ENCODE measurements at regions of chr5 and their contacts with region 1.

Region 1: DNA sequence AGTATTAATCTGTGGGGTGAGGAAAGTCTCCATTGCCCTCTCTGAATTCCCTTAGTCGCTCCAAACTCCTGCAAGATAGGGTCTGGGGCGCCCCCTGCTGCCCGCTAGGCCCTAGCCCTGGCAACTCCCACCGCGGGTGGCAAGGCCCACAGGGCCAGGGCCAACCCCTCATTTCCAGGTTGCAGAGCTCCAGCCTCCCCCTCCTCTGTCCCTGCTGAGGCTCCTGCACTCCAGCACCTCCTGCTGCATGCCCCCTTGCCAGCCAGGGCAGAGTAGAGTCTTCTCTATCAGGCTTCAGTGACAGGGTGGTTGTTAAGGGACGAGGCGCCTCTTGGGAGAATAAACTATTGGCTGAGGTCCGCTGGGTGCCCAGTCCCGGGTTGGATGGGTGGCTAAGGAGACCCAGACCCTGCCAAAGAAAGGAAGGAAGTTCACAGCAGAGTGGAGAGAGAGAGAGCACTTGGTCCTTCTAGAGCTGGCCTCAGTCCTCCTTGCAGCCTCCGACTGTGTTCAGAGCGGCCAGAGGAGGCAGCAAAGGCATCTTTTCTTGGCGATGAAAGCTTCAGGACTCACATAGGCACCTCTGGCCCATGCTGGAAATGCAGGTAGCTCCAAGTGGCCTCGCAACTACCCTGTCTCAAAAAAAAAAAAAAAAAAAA is 45.6 kb downstream of the SAR1B start:
- DNase-seq: peak; percentile 93
- ATAC-seq: peak; percentile 92
- H3K4me3 Mint-ChIP-seq: no peak overlapping the region
- H3K27ac Mint-ChIP-seq: peak overlapping the region; percentile 43
- H3K4me1 Mint-ChIP-seq: peaks cover 9% of the 10 kb centered on the region
- H3K27me3 Mint-ChIP-seq: no peaks in the 10 kb centered on the region
- CTCF ChIP-seq: peak; percentile 97

Region 2: DNA sequence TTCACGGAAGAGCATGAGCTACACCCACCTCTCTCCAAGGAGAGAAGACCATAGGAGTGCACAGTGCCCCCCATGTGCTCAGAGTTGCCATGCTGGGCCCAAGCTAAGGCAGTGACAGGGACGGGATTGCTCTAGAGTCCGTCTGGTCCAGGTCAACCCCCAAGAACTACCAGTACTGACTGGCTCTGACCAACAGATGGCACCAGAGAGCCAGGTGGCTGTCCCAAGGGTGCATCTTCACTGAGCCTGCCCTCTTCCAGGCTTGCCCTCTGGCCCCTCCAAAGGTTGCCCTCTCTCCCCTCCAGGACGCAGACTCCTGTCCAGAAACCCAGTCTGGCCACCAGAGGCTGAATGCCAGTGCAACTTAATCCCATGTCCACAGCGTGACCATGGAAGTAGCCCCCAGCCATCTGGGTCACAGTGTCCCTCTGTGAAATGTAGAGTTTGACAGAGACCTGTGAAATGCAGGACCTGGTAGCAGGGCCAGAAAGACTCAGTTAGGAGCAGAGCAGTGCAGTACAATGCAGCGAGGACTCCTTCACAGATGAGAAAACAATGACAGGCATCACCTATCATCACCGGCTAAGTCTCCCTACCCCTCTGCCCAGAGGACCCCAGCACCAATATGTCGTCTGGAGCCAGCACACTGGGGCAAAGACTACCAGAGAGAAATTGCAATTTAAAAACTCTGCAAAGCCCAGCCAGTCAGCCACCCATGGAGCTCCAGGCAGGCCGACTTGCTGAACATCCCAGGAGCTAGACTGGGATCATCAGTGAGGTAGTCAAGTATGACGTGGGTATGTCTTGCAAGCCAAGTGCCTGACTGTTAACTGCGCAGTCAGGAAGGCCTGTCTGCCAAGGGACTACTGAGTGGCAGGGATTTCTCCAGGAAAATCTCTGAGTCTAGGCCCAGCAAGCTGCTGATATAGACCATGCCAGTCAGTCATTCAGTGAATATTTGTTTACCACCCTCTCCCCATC is 402.6 kb before region 1 on chr5:
- CTCF ChIA-PET with region 1: interaction called, 6 read pairs
- POLR2A ChIA-PET with region 1: no interaction called
- intact Hi-C with region 1: loop called (anchors 10 kb)
- DNase-seq: peak; percentile 81
- ATAC-seq: peak; percentile 99
- H3K4me3 Mint-ChIP-seq: no peak overlapping the region
- H3K27ac Mint-ChIP-seq: no peak overlapping the region
- H3K4me1 Mint-ChIP-seq: no peaks in the 10 kb centered on the region
- H3K27me3 Mint-ChIP-seq: no peaks in the 10 kb centered on the region
- CTCF ChIP-seq: peak; percentile 87

Region 3: DNA sequence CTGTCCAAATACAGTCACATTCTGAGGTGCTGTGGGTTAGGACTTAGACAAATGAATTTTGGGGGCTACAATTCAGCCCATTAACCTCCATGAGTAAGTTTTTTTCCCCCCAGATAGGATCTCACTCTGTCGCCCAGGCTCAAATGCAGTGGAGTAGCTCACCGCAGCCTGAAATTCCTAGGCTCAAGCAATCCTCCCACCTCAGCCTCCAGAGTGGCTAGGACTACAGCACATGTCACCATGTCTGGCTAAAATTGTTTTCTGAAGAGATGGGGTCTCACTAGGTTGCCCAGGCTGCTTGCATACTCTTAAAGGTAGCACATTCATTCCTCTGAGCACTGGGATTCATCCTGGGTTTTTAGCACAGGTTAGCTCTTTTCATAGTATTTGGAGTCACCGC is 383.4 kb before region 1 on chr5:
- CTCF ChIA-PET with region 1: no interaction called
- POLR2A ChIA-PET with region 1: no interaction called
- intact Hi-C with region 1: no loop called
- DNase-seq: no peak
- ATAC-seq: no peak
- H3K4me3 Mint-ChIP-seq: no peak overlapping the region
- H3K27ac Mint-ChIP-seq: no peak overlapping the region
- H3K4me1 Mint-ChIP-seq: peaks cover 10% of the 10 kb centered on the region
- H3K27me3 Mint-ChIP-seq: no peaks in the 10 kb centered on the region
- CTCF ChIP-seq: no peak

Region 4: DNA sequence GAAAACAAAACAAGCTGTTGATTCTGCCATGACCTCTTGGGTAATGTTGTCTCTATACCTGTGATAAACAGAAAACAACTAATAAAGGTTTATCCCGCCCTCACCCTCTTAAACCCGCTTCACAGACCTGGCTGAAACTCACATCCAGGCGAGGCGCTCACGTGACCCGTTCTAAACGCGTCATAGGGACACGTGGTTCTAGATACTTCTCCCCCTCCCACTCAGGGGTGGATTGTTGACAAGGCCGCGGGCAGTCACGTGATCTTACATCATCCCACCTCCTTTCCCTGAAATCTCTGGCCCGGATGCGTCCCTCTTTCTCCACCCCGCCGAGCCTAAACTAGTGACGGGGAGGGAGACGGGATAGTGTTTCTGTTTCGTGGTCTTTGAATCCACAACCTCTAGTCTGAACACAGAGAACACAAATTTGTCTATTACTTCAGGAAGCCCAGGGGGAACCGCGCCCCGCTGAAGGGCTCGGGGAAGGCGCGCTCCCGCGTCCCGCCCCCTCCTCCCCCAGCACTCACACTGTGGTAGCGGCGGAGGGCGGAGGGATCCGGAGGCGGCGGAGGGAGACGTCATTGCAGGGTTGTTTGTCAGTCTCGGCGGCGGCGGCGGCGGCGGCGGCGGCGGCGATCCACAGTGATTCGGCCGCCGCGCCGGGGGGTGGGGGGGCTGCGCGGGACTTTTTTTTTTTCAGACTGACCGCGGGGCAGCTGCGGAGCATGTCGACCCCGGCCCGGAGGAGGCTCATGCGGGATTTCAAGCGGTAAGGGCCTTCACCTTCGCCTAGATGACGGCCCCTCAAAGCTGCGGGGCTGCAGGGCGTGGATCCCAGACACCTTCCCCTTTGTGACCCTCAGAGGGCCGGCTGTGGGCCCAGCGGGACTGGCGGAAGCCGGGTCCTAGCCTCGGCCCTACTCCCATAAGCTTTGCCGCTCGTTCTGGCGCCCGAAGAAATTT is 215.8 kb before region 1 on chr5 and contains the start of gene UBE2B:
- CTCF ChIA-PET with region 1: interaction called, 14 read pairs
- POLR2A ChIA-PET with region 1: no interaction called
- intact Hi-C with region 1: no loop called
- DNase-seq: peak; percentile 100
- ATAC-seq: peak; percentile 77
- H3K4me3 Mint-ChIP-seq: peak within 1 kb of the TSS; percentile 95
- H3K27ac Mint-ChIP-seq: peak within 1 kb of the TSS; percentile 99
- H3K4me1 Mint-ChIP-seq: peaks cover 41% of the 10 kb centered on the region
- H3K27me3 Mint-ChIP-seq: no peaks in the 10 kb centered on the region
- CTCF ChIP-seq: no peak
- total RNA-seq, gene UBE2B: 97.6 to 98.9 TPM

Region 5: DNA sequence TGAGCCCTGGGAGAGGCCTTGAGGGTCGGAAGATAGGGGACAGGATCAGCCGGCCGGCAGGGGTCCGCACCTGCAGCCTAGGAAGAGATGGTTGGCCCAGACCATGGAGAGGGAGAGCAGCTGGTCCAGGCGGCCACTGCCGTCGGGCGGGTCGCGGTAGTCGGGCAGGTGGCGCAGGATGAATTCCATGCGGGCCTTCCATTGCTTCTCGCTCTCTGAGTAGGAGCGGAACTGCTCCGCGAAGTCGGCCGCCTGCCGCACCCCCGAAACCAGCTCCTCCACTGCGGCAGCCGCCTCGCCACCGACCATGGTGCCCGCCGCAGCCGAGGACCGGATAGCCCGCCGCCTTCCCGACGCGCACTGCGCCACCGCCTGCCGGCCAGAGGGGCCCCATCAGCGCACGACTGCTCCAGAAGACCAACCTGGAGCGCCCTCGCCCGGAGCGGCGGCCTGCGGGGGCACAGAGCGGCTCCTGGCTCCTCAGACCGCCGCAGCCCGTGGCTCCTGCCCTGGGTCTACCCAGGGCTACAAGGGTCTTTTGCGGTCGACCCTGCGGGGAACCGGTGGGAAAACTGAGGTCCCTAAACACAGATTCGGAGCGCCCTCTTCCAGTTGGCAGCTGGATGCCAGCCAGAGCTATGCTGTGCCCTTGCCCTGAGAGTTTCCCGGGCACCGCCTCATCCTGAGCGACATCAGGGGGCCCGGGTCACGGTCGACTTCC is 175.3 kb before region 1 on chr5 and contains the start of gene CDKN2AIPNL:
- CTCF ChIA-PET with region 1: interaction called, 72 read pairs
- POLR2A ChIA-PET with region 1: interaction called, 4 read pairs
- intact Hi-C with region 1: no loop called
- DNase-seq: peak; percentile 94
- ATAC-seq: peak; percentile 99
- H3K4me3 Mint-ChIP-seq: peak within 1 kb of the TSS; percentile 97
- H3K27ac Mint-ChIP-seq: peak within 1 kb of the TSS; percentile 76
- H3K4me1 Mint-ChIP-seq: peaks cover 35% of the 10 kb centered on the region
- H3K27me3 Mint-ChIP-seq: no peaks in the 10 kb centered on the region
- CTCF ChIP-seq: peak; percentile 71
- total RNA-seq, gene CDKN2AIPNL: 38.2 to 41.1 TPM

Region 6: DNA sequence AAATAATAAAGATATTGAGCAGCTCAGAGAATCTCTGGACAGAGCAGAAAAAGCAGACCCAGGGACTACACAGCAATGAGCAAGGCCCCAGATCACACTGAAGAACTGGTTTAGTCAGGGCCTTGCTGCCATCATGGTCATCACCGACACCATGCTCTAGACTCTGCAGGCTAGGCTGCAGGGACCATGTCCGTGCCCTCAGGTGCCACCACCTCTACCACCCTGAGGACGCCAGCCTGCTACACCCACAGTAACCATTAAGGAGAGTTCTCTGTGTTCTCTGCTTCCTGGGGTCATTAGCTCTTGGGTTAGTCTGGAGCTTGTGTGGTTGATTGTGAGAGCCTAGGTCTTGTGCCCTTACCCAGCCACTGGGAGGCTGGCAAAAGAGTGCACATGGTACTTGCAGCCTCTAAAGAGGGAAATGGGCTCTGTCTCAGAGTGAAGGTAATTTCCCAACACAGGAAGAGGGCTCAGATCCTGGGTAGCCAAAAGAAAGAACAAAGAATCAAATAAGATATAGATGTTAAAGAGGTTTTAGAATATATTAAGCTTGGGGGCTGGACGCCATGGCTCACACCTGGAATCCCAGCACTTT is 93.4 kb before region 1 on chr5:
- CTCF ChIA-PET with region 1: no interaction called
- POLR2A ChIA-PET with region 1: no interaction called
- intact Hi-C with region 1: no loop called
- DNase-seq: no peak
- ATAC-seq: peak; percentile 27
- H3K4me3 Mint-ChIP-seq: no peak overlapping the region
- H3K27ac Mint-ChIP-seq: no peak overlapping the region
- H3K4me1 Mint-ChIP-seq: no peaks in the 10 kb centered on the region
- H3K27me3 Mint-ChIP-seq: no peaks in the 10 kb centered on the region
- CTCF ChIP-seq: no peak

Region 7: DNA sequence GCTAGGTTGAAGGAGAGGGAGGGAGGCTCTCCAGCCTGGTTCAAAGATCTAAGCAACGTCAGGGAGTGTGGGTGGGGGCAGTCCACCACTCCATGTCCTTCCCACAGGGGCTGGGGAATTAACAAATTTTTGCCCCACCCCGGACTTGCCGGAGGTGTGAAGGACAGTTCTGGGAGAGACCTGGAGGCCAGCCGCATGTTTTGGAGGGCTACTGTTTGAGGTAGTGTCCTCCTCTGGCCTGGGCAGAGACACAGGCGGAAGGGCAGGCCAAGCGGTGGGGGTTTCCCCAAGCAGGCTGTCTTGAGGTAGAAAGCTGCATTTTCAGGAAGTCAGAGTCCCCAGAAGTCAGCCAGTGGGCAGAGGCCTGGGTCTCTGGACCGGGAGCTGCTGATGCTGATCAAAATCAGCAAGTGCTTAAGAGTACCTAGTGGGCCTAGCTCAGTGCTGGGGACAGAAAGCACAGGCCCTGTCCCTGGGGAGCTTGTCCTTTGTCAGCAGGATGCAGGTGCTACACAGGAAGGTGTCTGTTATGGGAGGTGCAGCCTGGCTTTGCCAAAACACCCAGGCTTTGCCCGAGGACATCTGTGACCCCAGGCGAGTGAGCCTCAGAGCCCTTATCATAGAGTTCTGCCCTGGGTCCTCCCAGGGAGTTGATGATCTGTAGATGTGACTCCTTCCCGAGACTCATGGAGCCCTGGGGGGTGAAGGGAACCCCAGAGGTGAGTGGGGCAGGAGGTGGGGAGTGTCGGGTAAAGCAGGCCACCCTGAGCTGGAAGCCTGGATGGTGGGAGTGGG is 43.0 kb before region 1 on chr5:
- CTCF ChIA-PET with region 1: interaction called, 10 read pairs
- POLR2A ChIA-PET with region 1: no interaction called
- intact Hi-C with region 1: no loop called
- DNase-seq: peak; percentile 76
- ATAC-seq: peak; percentile 84
- H3K4me3 Mint-ChIP-seq: peak overlapping the region; percentile 76
- H3K27ac Mint-ChIP-seq: peak overlapping the region; percentile 96
- H3K4me1 Mint-ChIP-seq: peaks cover 70% of the 10 kb centered on the region
- H3K27me3 Mint-ChIP-seq: no peaks in the 10 kb centered on the region
- CTCF ChIP-seq: no peak

Region 8: DNA sequence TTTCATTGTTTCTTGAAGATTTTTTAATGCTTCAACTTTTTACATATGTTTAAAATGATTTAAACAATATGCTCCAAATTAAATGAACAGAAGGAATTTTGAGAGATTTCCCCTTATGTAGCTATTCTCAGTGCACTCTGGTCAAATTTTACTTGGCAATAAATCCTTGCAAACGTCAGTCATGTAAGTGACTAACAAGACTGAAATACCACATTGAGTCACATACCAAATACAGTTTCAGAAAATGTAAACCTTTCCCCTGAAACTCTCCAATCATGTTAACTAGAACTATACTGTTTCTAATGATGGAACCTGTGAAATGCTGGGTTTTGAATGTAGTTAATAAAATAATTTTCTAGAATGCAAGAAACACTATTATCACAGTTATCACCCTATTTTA is 16.1 kb after region 1 on chr5:
- CTCF ChIA-PET with region 1: interaction called, 41 read pairs
- POLR2A ChIA-PET with region 1: interaction called, 4 read pairs
- intact Hi-C with region 1: no loop called
- DNase-seq: no peak
- ATAC-seq: peak; percentile 90
- H3K4me3 Mint-ChIP-seq: no peak overlapping the region
- H3K27ac Mint-ChIP-seq: no peak overlapping the region
- H3K4me1 Mint-ChIP-seq: peaks cover 36% of the 10 kb centered on the region
- H3K27me3 Mint-ChIP-seq: no peaks in the 10 kb centered on the region
- CTCF ChIP-seq: no peak

Region 9: DNA sequence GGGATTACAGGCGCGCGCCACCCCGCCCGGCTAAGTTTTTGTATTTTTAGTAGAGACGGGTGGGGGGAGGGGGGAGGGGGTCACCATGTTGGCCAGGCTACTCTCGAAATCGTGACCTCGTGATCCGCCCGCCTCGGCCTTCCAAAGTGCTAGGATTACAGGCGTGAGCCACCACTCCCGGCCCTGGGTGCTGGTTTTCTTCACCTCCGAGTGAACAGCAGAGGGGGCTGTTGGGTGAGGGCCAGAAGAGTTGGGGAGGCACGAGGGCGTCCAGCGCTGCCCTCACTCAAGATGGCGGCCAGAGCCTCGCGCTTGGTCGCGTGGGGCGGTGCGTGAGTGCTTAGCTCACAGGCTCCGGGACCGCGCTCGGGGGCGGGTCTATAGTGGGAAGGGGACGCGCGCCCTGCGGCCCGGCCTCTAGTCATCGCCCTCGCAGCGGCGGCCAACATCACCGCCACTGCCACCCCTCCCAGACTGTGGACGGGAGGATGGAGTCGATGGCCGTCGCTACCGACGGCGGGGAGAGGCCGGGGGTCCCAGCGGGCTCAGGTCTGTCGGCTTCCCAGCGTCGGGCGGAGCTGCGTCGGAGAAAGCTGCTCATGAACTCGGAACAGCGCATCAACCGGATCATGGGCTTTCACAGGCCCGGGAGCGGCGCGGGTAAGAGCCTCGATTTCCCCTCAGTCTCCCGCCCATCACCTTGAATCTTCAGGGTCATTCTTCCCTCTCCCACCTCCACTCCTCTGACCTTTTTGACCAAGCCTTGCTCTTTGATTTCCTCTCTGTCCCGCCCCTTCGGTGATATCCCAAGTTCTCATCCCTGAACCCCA is 151.4 kb after region 1 on chr5 and contains the start of gene CAMLG:
- CTCF ChIA-PET with region 1: interaction called, 17 read pairs
- POLR2A ChIA-PET with region 1: no interaction called
- intact Hi-C with region 1: no loop called
- DNase-seq: peak; percentile 98
- ATAC-seq: peak; percentile 97
- H3K4me3 Mint-ChIP-seq: peak within 1 kb of the TSS; percentile 91
- H3K27ac Mint-ChIP-seq: peak within 1 kb of the TSS; percentile 86
- H3K4me1 Mint-ChIP-seq: peaks cover 18% of the 10 kb centered on the region
- H3K27me3 Mint-ChIP-seq: no peaks in the 10 kb centered on the region
- CTCF ChIP-seq: peak; percentile 59
- total RNA-seq, gene CAMLG: 33.8 to 35.9 TPM